CD4-positive, alpha-beta T cell (primary cell): ENCODE measurements at regions of chr6 and their contacts with region 1.

Region 1: GRCh38 chr6:41976794-41977484 is 35.3 kb upstream of the CCND3 start:
- DNase-seq: peak in 1 of 14 experiments; percentile 21
- ATAC-seq: peak; percentile 27
- H3K4me3 ChIP-seq: no peak overlapping the region
- H3K4me3 Mint-ChIP-seq: peak overlapping the region; percentile 43
- H3K27ac ChIP-seq: peak overlapping the region in 1 of 2 donors; percentile 3
- H3K27ac Mint-ChIP-seq: peak overlapping the region; percentile 90
- H3K4me1 ChIP-seq: peaks cover 79% of the 10 kb centered on the region
- H3K4me1 Mint-ChIP-seq: peaks cover 70% of the 10 kb centered on the region
- H3K27me3 ChIP-seq: no peaks in the 10 kb centered on the region
- H3K27me3 Mint-ChIP-seq: no peaks in the 10 kb centered on the region
- CTCF ChIP-seq: no peak

Region 2: DNA sequence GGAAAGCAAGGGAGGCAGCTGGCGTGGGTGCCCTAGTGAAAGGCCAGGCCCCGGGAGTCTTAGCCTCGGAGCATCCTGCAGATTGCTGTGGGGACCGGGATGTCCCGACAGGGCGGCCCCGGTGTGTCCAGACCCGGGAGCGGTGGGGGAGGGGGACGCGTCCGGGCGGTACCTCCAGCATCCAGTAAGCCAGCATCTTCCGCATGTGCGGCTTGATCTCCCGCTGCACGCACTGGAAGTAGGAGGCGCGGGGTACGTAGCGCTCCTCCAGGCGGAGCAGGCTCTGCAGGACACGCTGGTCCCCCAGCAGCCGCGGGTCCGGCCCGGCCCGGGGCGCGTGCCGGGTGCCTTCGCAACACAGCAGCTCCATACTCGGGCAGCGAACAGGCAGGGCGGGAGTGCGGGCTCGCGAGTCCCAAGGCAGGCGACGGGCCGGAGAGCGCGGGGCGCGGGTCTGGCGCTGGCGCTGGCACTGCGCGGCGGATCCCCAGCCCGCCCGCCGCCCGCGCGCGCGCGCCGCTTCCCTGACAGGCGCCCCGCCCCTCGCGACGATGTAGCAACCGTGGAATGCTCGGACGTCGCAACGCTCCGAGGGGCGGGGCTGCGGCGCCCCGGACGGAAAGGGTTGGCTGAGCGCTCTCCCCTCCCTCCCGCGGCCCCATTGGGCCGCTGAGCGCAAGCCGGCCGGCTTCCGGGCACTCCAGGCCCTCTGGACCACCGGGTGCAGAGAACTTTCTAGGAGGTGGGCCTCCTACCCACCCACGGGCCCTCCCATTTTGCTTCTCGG is 35.5 kb before region 1 on chr6 and contains the start of gene CCND3:
- CTCF ChIA-PET with region 1: interaction called, 4 read pairs
- POLR2A ChIA-PET with region 1: interaction called, 6 read pairs
- intact Hi-C with region 1: loop called (anchors 2 to 5 kb)
- DNase-seq: peak; percentile 63 to 92 (median 81)
- ATAC-seq: peak; percentile 55
- H3K4me3 ChIP-seq: peak within 1 kb of the TSS; percentile 96
- H3K4me3 Mint-ChIP-seq: peak within 1 kb of the TSS; percentile 97
- H3K27ac ChIP-seq: peak within 1 kb of the TSS; percentile 68 to 74
- H3K27ac Mint-ChIP-seq: peak within 1 kb of the TSS; percentile 93
- H3K4me1 ChIP-seq: peaks cover 72% of the 10 kb centered on the region
- H3K4me1 Mint-ChIP-seq: peaks cover 80% of the 10 kb centered on the region
- H3K27me3 ChIP-seq: no peaks in the 10 kb centered on the region
- H3K27me3 Mint-ChIP-seq: no peaks in the 10 kb centered on the region
- CTCF ChIP-seq: no peak
- total RNA-seq, gene CCND3: 247 to 248 TPM

Region 3: GRCh38 chr6:42028234-42029061 is 51.5 kb after region 1 on chr6:
- CTCF ChIA-PET with region 1: no interaction called
- POLR2A ChIA-PET with region 1: interaction called, 5 read pairs
- intact Hi-C with region 1: loop called in 1 of 2 experiments (anchors 5 kb)
- DNase-seq: peak in 1 of 14 experiments; percentile 55
- ATAC-seq: peak; percentile 16
- H3K4me3 ChIP-seq: no peak overlapping the region
- H3K4me3 Mint-ChIP-seq: peak overlapping the region; percentile 84
- H3K27ac ChIP-seq: peak overlapping the region; percentile 36 to 50
- H3K27ac Mint-ChIP-seq: peak overlapping the region; percentile 94
- H3K4me1 ChIP-seq: peaks cover 99% of the 10 kb centered on the region
- H3K4me1 Mint-ChIP-seq: peaks cover 90% of the 10 kb centered on the region
- H3K27me3 ChIP-seq: no peaks in the 10 kb centered on the region
- H3K27me3 Mint-ChIP-seq: no peaks in the 10 kb centered on the region
- CTCF ChIP-seq: no peak